Esophagus muscularis mucosa (tissue), 4 donors: ENCODE measurements at regions of chr13 and their contacts with region 1.

Region 1: GRCh38 chr13:50521831-50522149 is 321.7 kb downstream of the DLEU7 start:
- DNase-seq: no peak
- H3K4me3 ChIP-seq: no peak overlapping the region
- H3K27ac ChIP-seq: peak overlapping the region; percentile 40 to 64 (median 50)
- H3K4me1 ChIP-seq: peaks cover 12 to 66% (median 60%) of the 10 kb centered on the region in 4 donors
- H3K27me3 ChIP-seq: no peaks in the 10 kb centered on the region
- CTCF ChIP-seq: no peak
- EP300 ChIP-seq: no peak
- POLR2A ChIP-seq: no peak

Region 2: GRCh38 chr13:50357586-50358118 is 164.1 kb before region 1 on chr13:
- intact Hi-C with region 1: loop called (anchors 2 kb)
- DNase-seq: peak; percentile 83
- H3K4me3 ChIP-seq: no peak overlapping the region
- H3K27ac ChIP-seq: peak overlapping the region in 3 of 4 donors; percentile 29 to 71 (median 41)
- H3K4me1 ChIP-seq: peaks cover 18 to 47% (median 43%) of the 10 kb centered on the region in 4 donors
- H3K27me3 ChIP-seq: no peaks in the 10 kb centered on the region
- CTCF ChIP-seq: no peak
- EP300 ChIP-seq: no peak
- POLR2A ChIP-seq: no peak

Region 3: DNA sequence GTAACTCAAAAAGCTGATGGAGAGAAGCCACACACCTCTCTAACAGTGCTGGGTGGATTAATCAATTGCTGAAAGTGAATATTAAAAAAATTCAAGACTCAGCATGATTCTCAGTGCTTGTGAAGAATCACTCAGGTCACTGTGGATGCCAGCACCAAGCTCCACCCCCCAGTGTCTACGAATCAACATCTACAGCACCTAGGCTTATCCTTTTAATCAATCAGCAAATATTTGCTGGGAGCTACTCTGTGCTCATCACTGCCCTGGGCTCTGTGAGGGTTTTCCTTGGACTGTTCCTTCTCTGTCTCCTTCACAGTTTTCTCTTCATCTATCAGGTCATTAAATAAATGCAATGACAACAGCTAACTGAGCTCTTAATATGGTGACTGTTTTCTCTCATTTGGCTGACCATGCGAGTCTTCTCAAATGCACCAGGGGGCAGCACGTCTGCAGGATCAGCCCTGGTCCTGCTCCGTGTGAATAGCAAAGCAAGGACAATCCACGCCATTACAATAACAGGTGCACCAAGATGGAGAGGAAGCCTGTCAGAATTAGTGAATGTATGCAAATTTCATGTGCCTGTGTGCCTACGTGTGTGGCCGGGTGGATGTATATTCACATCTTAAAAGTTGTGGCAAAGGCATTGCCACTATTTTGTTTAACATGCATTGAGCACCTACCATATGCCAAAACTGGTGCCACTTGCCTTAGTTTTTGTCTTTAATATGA is 603.9 kb after region 1 on chr13:
- intact Hi-C with region 1: no loop called
- DNase-seq: peak; percentile 89
- H3K4me3 ChIP-seq: no peak overlapping the region
- H3K27ac ChIP-seq: no peak overlapping the region
- H3K4me1 ChIP-seq: no peaks in the 10 kb centered on the region
- H3K27me3 ChIP-seq: no peaks in the 10 kb centered on the region
- CTCF ChIP-seq: peak; percentile 59 to 74 (median 59)
- EP300 ChIP-seq: no peak
- POLR2A ChIP-seq: no peak